ENCODE measurements at regions of chr4 and their contacts with region 1.

Region 1: GRCh38 chr4:165464813-165465381 is 86.1 kb downstream of the CPE start:
- H3K4me3 ChIP-seq: no peak overlapping the region
- H3K27ac ChIP-seq: no peak overlapping the region
- H3K4me1 ChIP-seq: no peaks in the 10 kb centered on the region
- CTCF ChIP-seq: no peak

Region 2: DNA sequence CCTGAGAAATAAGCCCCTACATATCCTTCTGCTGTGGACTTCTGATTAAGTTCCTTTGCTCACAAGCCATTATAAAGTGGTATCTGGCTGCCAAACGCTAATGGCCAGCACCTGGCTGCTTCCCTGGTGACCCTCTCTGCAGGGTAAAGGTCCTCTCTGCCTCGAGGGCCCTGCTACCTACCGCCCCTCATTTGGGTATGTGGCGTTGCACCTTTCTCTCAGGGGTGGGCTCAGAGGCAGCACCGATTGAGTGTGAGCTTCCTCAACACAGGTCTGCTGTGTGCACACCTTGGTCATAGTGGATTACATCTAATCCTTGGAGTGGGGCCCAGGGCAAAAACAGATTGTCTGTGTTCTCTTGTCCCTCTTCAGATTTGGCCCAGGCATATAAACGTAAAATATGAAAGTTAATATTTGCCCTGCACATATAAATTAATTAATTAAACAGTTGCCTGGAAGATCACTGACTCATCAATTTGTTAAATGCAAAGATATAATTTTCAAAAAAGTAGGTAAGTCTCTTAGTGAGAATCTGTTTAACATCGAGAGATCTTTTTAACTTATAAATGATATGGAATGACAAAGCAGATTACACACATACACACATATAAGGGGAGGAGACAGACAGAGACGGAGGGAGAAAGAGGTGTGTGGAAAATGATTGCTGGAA is 885.5 kb before region 1 on chr4:
- CTCF ChIA-PET with region 1: no interaction called
- POLR2A ChIA-PET with region 1: no interaction called
- H3K4me3 ChIP-seq: no peak overlapping the region
- H3K27ac ChIP-seq: no peak overlapping the region
- H3K4me1 ChIP-seq: no peaks in the 10 kb centered on the region
- CTCF ChIP-seq: no peak

Region 3: DNA sequence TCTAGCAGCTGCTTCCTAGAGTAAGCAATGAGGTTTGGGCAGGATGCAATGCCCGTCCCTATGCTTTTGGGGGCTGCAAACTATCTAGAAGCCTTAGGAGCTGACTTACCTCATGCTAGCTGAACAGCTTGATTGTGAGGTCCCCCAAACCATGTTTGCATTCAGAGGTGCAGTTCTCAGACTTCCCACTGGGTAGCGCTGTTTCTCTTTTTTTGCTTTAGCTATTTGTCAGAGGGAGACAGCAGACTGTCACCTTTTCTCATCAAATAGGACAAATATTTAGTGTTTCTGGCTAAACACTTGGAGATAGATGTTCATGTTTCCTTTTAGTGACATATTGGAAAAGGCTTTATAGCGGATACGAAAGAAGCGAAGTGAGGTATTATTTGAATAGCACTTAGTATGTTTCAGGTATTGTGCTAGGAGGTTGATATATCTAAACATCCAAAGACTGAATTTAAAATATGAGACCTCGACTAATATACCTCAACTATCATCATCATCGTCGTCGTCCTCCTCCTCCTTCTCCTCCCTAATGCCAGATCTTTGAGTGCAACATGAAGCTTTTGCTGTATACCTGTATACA is 333.6 kb before region 1 on chr4:
- CTCF ChIA-PET with region 1: interaction called, 23 read pairs
- POLR2A ChIA-PET with region 1: no interaction called
- H3K4me3 ChIP-seq: no peak overlapping the region
- H3K27ac ChIP-seq: no peak overlapping the region
- H3K4me1 ChIP-seq: no peaks in the 10 kb centered on the region
- CTCF ChIP-seq: peak; percentile 33

Region 4: DNA sequence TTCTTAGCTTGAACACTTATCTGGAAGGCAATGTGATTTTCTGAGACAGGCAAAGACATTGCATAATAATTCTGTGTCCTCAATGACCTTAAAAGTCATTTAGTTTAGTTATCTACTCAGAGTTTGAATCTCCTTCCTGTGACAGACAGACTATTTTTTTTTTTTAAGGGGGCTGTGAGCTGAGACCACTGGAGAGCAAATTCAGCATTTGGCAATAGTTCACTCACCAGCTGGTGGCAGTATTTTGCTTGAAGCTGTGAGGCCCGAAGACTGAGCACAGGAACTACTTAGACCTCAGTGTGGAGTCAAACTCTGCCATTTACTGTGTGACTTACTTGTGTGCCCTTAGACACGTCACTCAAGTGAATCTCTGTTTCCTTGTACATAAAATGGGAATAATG is 109.0 kb before region 1 on chr4:
- CTCF ChIA-PET with region 1: interaction called, 23 read pairs
- POLR2A ChIA-PET with region 1: no interaction called
- H3K4me3 ChIP-seq: no peak overlapping the region
- H3K27ac ChIP-seq: no peak overlapping the region
- H3K4me1 ChIP-seq: no peaks in the 10 kb centered on the region; the same call in 1 of the 2 replicates
- CTCF ChIP-seq: 0 out of 2 replicates have a peak, but pooled peaks have one; percentile 17

Region 5: GRCh38 chr4:165384598-165384997 is 80.3 kb before region 1 on chr4:
- CTCF ChIA-PET with region 1: interaction called, 15 read pairs
- POLR2A ChIA-PET with region 1: no interaction called
- H3K4me3 ChIP-seq: no peak overlapping the region
- H3K27ac ChIP-seq: peak overlapping the region; percentile 34; the same call in 1 of the 2 replicates
- H3K4me1 ChIP-seq: peaks cover 42% of the 10 kb centered on the region
- CTCF ChIP-seq: 0 out of 2 replicates have a peak, but pooled peaks have one; percentile 17

Region 6: GRCh38 chr4:165537028-165537648 is 72.2 kb after region 1 on chr4:
- CTCF ChIA-PET with region 1: no interaction called
- POLR2A ChIA-PET with region 1: no interaction called
- H3K4me3 ChIP-seq: no peak overlapping the region
- H3K27ac ChIP-seq: no peak overlapping the region
- H3K4me1 ChIP-seq: no peaks in the 10 kb centered on the region
- CTCF ChIP-seq: no peak

Measured in HEK293 (cell line).